ENCODE measurements at regions of chr17 and their contacts with region 1.

Region 1: DNA sequence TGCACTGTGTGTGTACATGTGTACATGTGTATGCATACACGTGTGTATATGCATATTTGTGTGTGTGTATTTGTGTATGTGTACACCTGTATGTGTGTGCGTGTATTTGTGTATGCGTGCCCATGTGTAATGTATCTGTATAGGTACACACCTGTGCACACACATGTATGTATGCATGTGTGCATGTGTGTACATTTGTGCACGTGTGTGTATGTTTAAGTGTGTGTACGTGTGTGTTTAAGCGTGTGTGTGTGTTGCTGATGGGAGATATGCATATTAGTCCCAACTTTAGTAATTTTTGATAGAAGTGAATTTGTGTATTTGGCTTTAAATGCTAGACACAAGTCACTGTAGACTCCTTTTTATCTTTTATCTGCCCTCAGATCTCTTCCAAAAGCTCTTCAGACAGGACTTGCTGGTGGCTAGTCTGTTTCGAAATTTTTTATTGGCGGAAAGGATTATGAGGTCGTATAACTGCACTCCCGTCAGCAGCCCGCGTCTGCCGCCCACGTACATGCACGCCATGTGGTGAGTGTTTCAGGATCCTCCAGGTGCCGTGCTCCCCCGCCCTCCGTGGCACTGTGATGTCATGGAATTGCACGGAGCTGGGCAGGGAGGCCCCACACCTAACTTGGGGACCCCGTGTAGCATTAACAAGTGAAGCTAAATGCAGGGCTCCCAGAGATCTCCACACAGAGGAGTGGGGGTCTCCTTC is 168.8 kb upstream of the CHMP6 start:
- DNase-seq: no peak
- ATAC-seq: no peak
- H3K4me3 ChIP-seq: no peak overlapping the region
- H3K27ac ChIP-seq: no peak overlapping the region
- H3K4me1 ChIP-seq: peaks cover 11% of the 10 kb centered on the region
- H3K27me3 ChIP-seq: no peaks in the 10 kb centered on the region
- CTCF ChIP-seq: no peak

Region 2: DNA sequence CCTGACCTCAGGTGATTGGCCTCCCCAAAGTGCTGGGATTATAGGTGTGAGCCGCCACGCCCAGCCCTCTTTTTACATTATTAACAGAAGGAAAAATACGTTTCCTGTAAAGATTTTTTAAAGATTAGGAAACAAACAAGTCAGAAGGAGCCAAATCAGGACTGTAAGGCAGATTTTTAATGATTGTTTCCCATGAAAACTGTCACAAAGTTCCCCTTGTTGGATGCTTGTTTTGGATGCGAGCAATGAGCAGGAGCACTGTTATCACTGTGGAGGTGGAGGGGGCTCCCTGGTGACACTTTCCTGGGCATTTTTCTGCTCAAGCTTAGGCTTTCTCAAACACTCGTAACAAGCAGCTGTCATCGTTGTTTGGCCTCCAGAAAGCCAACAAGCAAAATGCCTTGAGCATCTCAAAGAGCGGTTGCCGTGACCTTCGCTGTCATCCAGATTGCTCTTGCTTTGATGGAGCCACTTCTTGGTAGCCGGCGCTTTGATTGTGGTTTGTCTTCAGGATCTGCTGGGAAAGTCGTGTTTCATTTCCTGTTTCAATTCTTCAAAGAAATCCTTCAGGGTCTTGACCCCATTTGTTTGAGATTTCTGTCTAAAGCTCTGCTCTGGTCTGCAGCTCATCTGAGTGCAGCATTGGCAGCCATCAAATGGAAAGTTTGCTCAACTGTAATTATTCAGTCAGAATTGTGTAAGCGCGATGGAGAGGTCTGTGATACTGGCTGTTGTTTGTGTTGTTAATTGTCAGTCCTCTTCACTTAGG is 149.5 kb before region 1 on chr17:
- CTCF ChIA-PET with region 1: interaction called, 13 read pairs
- POLR2A ChIA-PET with region 1: no interaction called
- in situ Hi-C with region 1: no loop called
- intact Hi-C with region 1: no loop called
- DNase-seq: no peak
- ATAC-seq: no peak
- H3K4me3 ChIP-seq: no peak overlapping the region
- H3K27ac ChIP-seq: no peak overlapping the region
- H3K4me1 ChIP-seq: no peaks in the 10 kb centered on the region; the same call in 1 of the 2 replicates
- H3K27me3 ChIP-seq: no peaks in the 10 kb centered on the region
- CTCF ChIP-seq: no peak

Region 3: GRCh38 chr17:80694992-80695912 is 127.6 kb before region 1 on chr17:
- CTCF ChIA-PET with region 1: no interaction called
- POLR2A ChIA-PET with region 1: no interaction called
- in situ Hi-C with region 1: no loop called
- intact Hi-C with region 1: no loop called
- DNase-seq: no peak
- ATAC-seq: 0 out of 2 replicates have a peak, but pooled peaks have one; percentile 25
- H3K4me3 ChIP-seq: no peak overlapping the region
- H3K27ac ChIP-seq: no peak overlapping the region
- H3K4me1 ChIP-seq: peaks cover 6% of the 10 kb centered on the region
- H3K27me3 ChIP-seq: no peaks in the 10 kb centered on the region
- CTCF ChIP-seq: no peak

Region 4: DNA sequence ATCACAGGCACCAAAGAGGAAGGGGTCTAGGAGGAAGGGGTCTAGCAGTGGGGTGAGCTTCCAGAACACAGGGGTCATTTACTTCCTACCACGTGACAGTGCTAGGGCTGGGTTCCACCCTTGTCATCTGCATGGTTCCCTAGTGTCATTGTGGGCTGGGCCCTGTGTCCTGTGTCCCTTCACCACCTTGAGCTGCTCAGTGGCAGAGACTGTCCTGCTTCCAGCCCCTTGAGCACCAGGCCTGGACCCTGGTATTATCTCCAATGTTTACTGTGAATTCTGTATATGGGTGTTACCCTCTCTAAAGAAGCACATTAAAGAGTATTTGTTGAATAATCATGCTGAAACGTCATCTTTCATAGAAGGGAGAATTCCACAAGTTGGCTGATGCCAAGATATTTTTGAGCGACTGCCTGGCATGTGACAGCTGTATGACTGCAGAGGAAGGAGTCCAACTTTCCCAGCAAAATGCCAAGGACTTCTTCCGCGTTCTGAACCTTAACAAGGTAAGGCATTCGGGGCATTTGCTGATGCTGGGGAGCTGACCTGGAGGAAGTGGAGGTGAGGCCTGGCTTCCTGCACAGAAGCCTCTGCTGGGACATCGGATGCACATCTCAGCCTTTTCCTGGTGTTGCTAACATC is 1641.2 kb after region 1 on chr17:
- CTCF ChIA-PET with region 1: no interaction called
- POLR2A ChIA-PET with region 1: interaction called, 12 read pairs
- in situ Hi-C with region 1: no loop called
- intact Hi-C with region 1: no loop called
- DNase-seq: no peak
- ATAC-seq: no peak
- H3K4me3 ChIP-seq: no peak overlapping the region
- H3K27ac ChIP-seq: no peak overlapping the region
- H3K4me1 ChIP-seq: peaks cover 6% of the 10 kb centered on the region; the same call in 1 of the 2 replicates
- H3K27me3 ChIP-seq: no peaks in the 10 kb centered on the region
- CTCF ChIP-seq: no peak